ENCODE measurements at regions of chr1 and their contacts with region 1.

Region 1: DNA sequence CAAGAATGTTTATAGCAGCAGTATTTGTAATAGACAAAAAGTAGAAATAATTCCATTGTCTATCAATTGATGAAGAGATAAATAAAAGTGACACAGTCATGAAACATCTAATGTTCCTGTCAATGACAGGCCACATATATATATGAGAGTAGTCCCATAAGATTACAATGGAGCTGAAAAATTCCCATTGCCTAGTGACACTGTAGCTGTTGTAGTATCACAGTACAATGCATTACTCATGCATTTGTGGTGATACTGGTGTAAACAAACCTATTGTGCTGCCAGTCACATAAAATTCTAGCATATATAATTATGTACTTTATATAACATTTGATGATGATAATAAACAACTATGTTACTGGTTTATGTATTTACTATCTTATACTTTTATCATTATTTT is 141.9 kb upstream of the LYPLAL1 start:
- DNase-seq: no peak
- ATAC-seq: no peak
- H3K4me3 ChIP-seq: no peak overlapping the region
- H3K4me3 Mint-ChIP-seq: no peak overlapping the region
- H3K27ac ChIP-seq: no peak overlapping the region
- H3K27ac Mint-ChIP-seq: no peak overlapping the region
- H3K4me1 ChIP-seq: no peaks in the 10 kb centered on the region
- H3K4me1 Mint-ChIP-seq: no peaks in the 10 kb centered on the region
- H3K27me3 ChIP-seq: no peaks in the 10 kb centered on the region
- H3K27me3 Mint-ChIP-seq: no peaks in the 10 kb centered on the region
- CTCF ChIP-seq: no peak

Region 2: DNA sequence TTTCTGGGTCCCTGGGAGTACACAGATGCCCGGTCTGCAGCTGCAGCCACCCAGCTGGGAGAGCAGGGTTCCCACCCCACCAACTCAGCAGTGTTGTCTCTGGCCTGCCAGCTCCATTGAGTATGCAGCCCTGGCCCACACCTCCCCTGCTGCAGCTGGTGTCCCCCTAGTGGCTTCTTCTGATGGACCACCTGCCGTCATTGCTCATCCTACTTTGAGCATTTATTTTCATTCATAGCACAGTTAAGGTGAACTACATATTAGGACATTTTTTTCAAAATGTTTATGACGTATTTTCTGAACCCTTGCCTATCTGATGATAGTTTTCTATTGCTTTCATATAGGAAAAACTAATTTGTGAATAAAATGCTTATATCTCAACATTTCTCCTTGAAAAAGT is 47.9 kb before region 1 on chr1:
- CTCF ChIA-PET with region 1: no interaction called
- POLR2A ChIA-PET with region 1: no interaction called
- intact Hi-C with region 1: no loop called
- DNase-seq: no peak
- ATAC-seq: no peak
- H3K4me3 ChIP-seq: no peak overlapping the region
- H3K4me3 Mint-ChIP-seq: no peak overlapping the region
- H3K27ac ChIP-seq: no peak overlapping the region
- H3K27ac Mint-ChIP-seq: no peak overlapping the region
- H3K4me1 ChIP-seq: no peaks in the 10 kb centered on the region
- H3K4me1 Mint-ChIP-seq: no peaks in the 10 kb centered on the region
- H3K27me3 ChIP-seq: no peaks in the 10 kb centered on the region
- H3K27me3 Mint-ChIP-seq: no peaks in the 10 kb centered on the region
- CTCF ChIP-seq: no peak

Region 3: GRCh38 chr1:219010720-219011119 is 21.1 kb before region 1 on chr1:
- CTCF ChIA-PET with region 1: no interaction called
- POLR2A ChIA-PET with region 1: no interaction called
- intact Hi-C with region 1: no loop called
- DNase-seq: no peak
- ATAC-seq: no peak
- H3K4me3 ChIP-seq: no peak overlapping the region
- H3K4me3 Mint-ChIP-seq: no peak overlapping the region
- H3K27ac ChIP-seq: no peak overlapping the region
- H3K27ac Mint-ChIP-seq: no peak overlapping the region
- H3K4me1 ChIP-seq: no peaks in the 10 kb centered on the region
- H3K4me1 Mint-ChIP-seq: no peaks in the 10 kb centered on the region
- H3K27me3 ChIP-seq: no peaks in the 10 kb centered on the region
- H3K27me3 Mint-ChIP-seq: peaks cover 2% of the 10 kb centered on the region
- CTCF ChIP-seq: no peak

Region 4: GRCh38 chr1:219317762-219318353 is 286.0 kb after region 1 on chr1:
- CTCF ChIA-PET with region 1: no interaction called
- POLR2A ChIA-PET with region 1: no interaction called
- intact Hi-C with region 1: loop called in 1 of 2 experiments (anchors 10 kb)
- DNase-seq: no peak
- ATAC-seq: no peak
- H3K4me3 ChIP-seq: no peak overlapping the region
- H3K4me3 Mint-ChIP-seq: no peak overlapping the region
- H3K27ac ChIP-seq: no peak overlapping the region
- H3K27ac Mint-ChIP-seq: no peak overlapping the region
- H3K4me1 ChIP-seq: no peaks in the 10 kb centered on the region
- H3K4me1 Mint-ChIP-seq: no peaks in the 10 kb centered on the region
- H3K27me3 ChIP-seq: no peaks in the 10 kb centered on the region
- H3K27me3 Mint-ChIP-seq: no peaks in the 10 kb centered on the region
- CTCF ChIP-seq: no peak